PC-3 (cell line): ENCODE measurements at regions of chr3 and their contacts with region 1.

Region 1: GRCh38 chr3:172516318-172517214 is 6.7 kb downstream of the TNFSF10 start:
- DNase-seq: peak; percentile 95
- ATAC-seq: peak; percentile 99
- H3K4me3 ChIP-seq: peak overlapping the region; percentile 33; the same call in 1 of the 2 replicates
- H3K27ac ChIP-seq: peak overlapping the region; percentile 80
- H3K4me1 ChIP-seq: peaks cover 20% of the 10 kb centered on the region
- H3K27me3 ChIP-seq: no peaks in the 10 kb centered on the region
- CTCF ChIP-seq: no peak

Region 2: GRCh38 chr3:172546628-172547214 is 30.2 kb after region 1 on chr3:
- CTCF ChIA-PET with region 1: no interaction called
- POLR2A ChIA-PET with region 1: no interaction called
- intact Hi-C with region 1: loop called (anchors 2 kb)
- DNase-seq: no peak
- ATAC-seq: no peak
- H3K4me3 ChIP-seq: peak overlapping the region; percentile 29; the same call in 1 of the 2 replicates
- H3K27ac ChIP-seq: no peak overlapping the region
- H3K4me1 ChIP-seq: peaks cover 20% of the 10 kb centered on the region
- H3K27me3 ChIP-seq: no peaks in the 10 kb centered on the region
- CTCF ChIP-seq: no peak

Region 3: GRCh38 chr3:172607305-172608121 is 90.9 kb after region 1 on chr3:
- CTCF ChIA-PET with region 1: no interaction called
- POLR2A ChIA-PET with region 1: no interaction called
- intact Hi-C with region 1: no loop called
- DNase-seq: peak; percentile 73
- ATAC-seq: peak; percentile 75
- H3K4me3 ChIP-seq: no peak overlapping the region
- H3K27ac ChIP-seq: peak overlapping the region; percentile 56
- H3K4me1 ChIP-seq: peaks cover 10% of the 10 kb centered on the region
- H3K27me3 ChIP-seq: no peaks in the 10 kb centered on the region
- CTCF ChIP-seq: no peak